A549 (cell line): ENCODE measurements at regions of chr2 and their contacts with region 1.

Region 1: GRCh38 chr2:47323009-47323821 is 79.7 kb upstream of the MSH2 start:
- DNase-seq: peak; percentile 81 to 92
- ATAC-seq: peak; percentile 89 to 93
- H3K4me3 ChIP-seq: no peak overlapping the region
- H3K27ac ChIP-seq: peak overlapping the region; percentile 48 to 77
- H3K4me1 ChIP-seq: peaks cover 44% of the 10 kb centered on the region
- CTCF ChIP-seq: peak; percentile 97
- EP300 ChIP-seq: no peak
- POLR2A ChIP-seq: no peak
- RAD21 ChIP-seq: peak; percentile 99 to 100

Region 2: GRCh38 chr2:46899053-46899452 is 424.2 kb before region 1 on chr2:
- CTCF ChIA-PET with region 1: interaction called, 12 read pairs
- POLR2A ChIA-PET with region 1: no interaction called
- DNase-seq: no peak
- ATAC-seq: no peak
- H3K4me3 ChIP-seq: no peak overlapping the region
- H3K27ac ChIP-seq: no peak overlapping the region
- H3K4me1 ChIP-seq: 0 out of 3 replicates have a peak, but pooled peaks cover 9% of the 10 kb centered on the region
- CTCF ChIP-seq: no peak
- EP300 ChIP-seq: no peak
- POLR2A ChIP-seq: no peak
- RAD21 ChIP-seq: no peak

Region 3: DNA sequence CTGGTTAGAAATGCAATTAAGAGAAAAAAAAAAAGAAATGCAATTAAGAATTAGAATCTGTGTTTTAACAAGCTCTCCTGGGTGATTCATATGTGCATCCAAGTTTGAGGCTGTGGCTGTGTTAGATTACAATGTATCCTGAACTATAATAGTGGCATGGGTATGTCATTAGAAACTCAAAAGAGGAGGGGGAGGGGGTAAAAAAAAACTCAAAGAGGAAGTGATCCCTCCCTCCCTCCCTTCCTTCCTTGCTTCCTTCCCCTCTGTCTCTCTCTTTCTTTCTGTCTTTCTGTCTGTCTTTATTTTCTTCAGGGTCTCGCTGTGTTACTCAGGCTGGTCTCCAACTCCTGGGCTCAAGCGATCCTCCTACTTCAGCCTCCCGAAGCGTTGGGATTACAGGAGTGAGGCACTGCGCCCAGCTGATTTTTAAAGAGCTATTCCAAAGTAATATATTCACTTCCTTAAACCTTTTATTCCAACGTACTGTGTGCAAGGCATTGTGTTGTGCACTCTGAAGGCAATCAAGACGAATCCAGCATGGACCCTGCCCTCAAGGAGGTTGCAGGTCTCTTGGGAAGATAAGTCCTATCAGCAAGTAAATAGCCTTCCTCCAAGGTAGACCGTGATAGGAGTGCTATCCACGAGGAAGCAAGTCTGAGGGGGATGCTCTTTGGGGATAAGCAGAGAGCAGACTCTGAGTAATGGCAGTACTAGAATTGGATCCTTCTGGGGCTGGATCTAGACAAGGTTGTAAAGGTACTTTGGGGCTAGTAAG is 371.7 kb before region 1 on chr2:
- CTCF ChIA-PET with region 1: interaction called, 15 read pairs
- POLR2A ChIA-PET with region 1: no interaction called
- DNase-seq: no peak
- ATAC-seq: no peak
- H3K4me3 ChIP-seq: no peak overlapping the region
- H3K27ac ChIP-seq: no peak overlapping the region; a peak in 1 of 6 replicates
- H3K4me1 ChIP-seq: peaks cover 51% of the 10 kb centered on the region
- CTCF ChIP-seq: no peak
- EP300 ChIP-seq: no peak
- POLR2A ChIP-seq: no peak
- RAD21 ChIP-seq: no peak

Region 4: GRCh38 chr2:47043142-47043890 is 279.9 kb before region 1 on chr2:
- CTCF ChIA-PET with region 1: interaction called, 26 read pairs
- POLR2A ChIA-PET with region 1: interaction called, 3 read pairs
- DNase-seq: peak; percentile 81 to 96
- ATAC-seq: peak; percentile 87 to 88
- H3K4me3 ChIP-seq: no peak overlapping the region; the same call in 2 of the 3 replicates
- H3K27ac ChIP-seq: peak overlapping the region; percentile 86 to 97
- H3K4me1 ChIP-seq: peaks cover 54% of the 10 kb centered on the region
- CTCF ChIP-seq: no peak; the same call in 2 of the 3 replicates
- EP300 ChIP-seq: peak in 1 of 2 experiments; percentile 37; a peak in 1 of 5 replicates
- POLR2A ChIP-seq: no peak
- RAD21 ChIP-seq: peak; percentile 32 to 33; a peak in 4 of 5 replicates

Region 5: DNA sequence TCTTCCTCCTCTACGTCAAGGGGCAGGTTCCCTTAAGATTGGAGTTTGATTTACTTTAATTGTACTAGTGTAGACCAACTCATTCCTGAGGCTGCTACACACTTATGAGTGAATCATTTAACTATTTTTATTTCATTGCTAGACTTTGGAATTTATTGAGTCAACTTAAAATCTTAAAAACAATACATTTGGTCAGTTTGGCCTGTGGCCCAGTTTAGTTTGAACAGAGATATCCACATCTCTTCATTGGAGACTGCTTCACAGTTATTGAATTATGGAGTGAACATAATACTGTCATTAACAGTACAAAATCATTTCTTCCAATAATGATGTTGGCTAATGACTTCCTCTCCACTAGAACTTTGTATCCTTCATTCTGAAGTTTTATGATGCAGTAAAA is 133.6 kb before region 1 on chr2:
- CTCF ChIA-PET with region 1: interaction called, 16 read pairs
- POLR2A ChIA-PET with region 1: no interaction called
- DNase-seq: peak in 1 of 2 experiments; percentile 62
- ATAC-seq: no peak
- H3K4me3 ChIP-seq: no peak overlapping the region
- H3K27ac ChIP-seq: peak overlapping the region; percentile 89 to 94
- H3K4me1 ChIP-seq: peaks cover 66% of the 10 kb centered on the region
- CTCF ChIP-seq: no peak
- EP300 ChIP-seq: 0 out of 5 replicates have a peak, but pooled peaks of 1 of the 2 experiments have one; percentile 17
- POLR2A ChIP-seq: no peak
- RAD21 ChIP-seq: no peak; a peak in 2 of 5 replicates

Region 6: GRCh38 chr2:47309952-47310800 is 13.0 kb before region 1 on chr2:
- CTCF ChIA-PET with region 1: interaction called, 113 read pairs
- POLR2A ChIA-PET with region 1: no interaction called
- DNase-seq: peak in 1 of 2 experiments; percentile 90
- ATAC-seq: peak; percentile 63 to 66
- H3K4me3 ChIP-seq: no peak overlapping the region
- H3K27ac ChIP-seq: peak overlapping the region; percentile 78 to 83
- H3K4me1 ChIP-seq: peaks cover 73% of the 10 kb centered on the region
- CTCF ChIP-seq: no peak
- EP300 ChIP-seq: peak in 1 of 2 experiments; percentile 30; a peak in 1 of 5 replicates
- POLR2A ChIP-seq: no peak
- RAD21 ChIP-seq: 0 out of 5 replicates have a peak, but pooled peaks of 1 of the 2 experiments have one; percentile 23

Region 7: DNA sequence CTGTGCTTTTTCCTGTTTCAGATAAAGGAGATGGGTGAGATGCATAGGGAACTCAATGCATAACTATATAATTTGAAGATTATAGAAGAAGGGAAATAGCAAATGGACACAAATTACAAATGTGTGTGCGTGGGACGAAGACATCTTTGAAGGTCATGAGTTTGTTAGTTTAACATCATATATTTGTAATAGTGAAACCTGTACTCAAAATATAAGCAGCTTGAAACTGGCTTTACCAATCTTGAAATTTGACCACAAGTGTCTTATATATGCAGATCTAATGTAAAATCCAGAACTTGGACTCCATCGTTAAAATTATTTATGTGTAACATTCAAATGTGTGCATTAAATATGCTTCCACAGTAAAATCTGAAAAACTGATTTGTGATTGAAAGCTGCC is 63.3 kb after region 1 on chr2:
- CTCF ChIA-PET with region 1: interaction called, 298 read pairs
- POLR2A ChIA-PET with region 1: no interaction called
- DNase-seq: no peak
- ATAC-seq: no peak
- H3K4me3 ChIP-seq: no peak overlapping the region
- H3K27ac ChIP-seq: no peak overlapping the region
- H3K4me1 ChIP-seq: no peaks in the 10 kb centered on the region
- CTCF ChIP-seq: no peak
- EP300 ChIP-seq: no peak
- POLR2A ChIP-seq: no peak
- RAD21 ChIP-seq: no peak